ENCODE measurements at regions of chr13 and their contacts with region 1.

Region 1: DNA sequence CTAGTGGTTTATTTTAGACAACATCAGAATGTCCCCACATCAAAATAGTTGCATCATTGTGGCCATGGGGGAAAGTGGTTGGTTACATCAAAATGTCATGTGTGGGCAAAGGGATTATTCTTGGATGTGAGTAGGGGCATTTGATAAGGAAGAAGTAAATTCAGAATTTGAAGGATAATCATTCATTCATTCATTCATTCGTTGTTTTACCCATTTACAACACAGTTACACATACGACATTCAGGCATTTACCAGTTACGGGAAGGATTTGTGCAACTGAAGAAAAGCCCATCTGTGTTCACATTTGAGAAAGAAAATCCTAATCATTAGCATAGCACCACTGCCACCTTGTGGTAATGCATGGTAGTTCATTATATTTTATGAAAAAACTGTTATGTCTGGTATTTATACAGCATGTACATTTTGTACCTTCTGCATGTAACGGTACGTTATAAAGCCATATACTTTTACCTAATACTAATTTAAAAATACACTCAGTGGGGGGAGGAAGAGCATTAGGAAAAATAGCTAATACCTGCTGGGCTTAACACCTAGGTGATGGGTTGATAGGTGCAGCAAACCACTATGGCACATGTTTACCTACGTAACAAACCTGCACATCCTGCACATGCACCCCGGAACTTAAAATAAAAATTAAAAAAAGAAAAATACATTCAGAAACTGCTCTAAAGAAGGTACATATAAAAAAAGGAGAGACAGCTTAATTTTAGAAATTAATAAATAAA is 62.1 kb downstream of the DGKH start:
- DNase-seq: no peak
- ATAC-seq: peak; percentile 67
- H3K4me3 Mint-ChIP-seq: no peak overlapping the region
- H3K27ac Mint-ChIP-seq: no peak overlapping the region
- H3K4me1 Mint-ChIP-seq: no peaks in the 10 kb centered on the region
- H3K27me3 Mint-ChIP-seq: peaks cover 5% of the 10 kb centered on the region
- CTCF ChIP-seq: peak; percentile 21

Region 2: GRCh38 chr13:41075034-41075433 is 1035.5 kb before region 1 on chr13:
- CTCF ChIA-PET with region 1: no interaction called
- POLR2A ChIA-PET with region 1: no interaction called
- intact Hi-C with region 1: loop called (anchors 1 kb)
- DNase-seq: no peak
- ATAC-seq: peak; percentile 58
- H3K4me3 Mint-ChIP-seq: no peak overlapping the region
- H3K27ac Mint-ChIP-seq: no peak overlapping the region
- H3K4me1 Mint-ChIP-seq: no peaks in the 10 kb centered on the region
- H3K27me3 Mint-ChIP-seq: no peaks in the 10 kb centered on the region
- CTCF ChIP-seq: no peak

Region 3: DNA sequence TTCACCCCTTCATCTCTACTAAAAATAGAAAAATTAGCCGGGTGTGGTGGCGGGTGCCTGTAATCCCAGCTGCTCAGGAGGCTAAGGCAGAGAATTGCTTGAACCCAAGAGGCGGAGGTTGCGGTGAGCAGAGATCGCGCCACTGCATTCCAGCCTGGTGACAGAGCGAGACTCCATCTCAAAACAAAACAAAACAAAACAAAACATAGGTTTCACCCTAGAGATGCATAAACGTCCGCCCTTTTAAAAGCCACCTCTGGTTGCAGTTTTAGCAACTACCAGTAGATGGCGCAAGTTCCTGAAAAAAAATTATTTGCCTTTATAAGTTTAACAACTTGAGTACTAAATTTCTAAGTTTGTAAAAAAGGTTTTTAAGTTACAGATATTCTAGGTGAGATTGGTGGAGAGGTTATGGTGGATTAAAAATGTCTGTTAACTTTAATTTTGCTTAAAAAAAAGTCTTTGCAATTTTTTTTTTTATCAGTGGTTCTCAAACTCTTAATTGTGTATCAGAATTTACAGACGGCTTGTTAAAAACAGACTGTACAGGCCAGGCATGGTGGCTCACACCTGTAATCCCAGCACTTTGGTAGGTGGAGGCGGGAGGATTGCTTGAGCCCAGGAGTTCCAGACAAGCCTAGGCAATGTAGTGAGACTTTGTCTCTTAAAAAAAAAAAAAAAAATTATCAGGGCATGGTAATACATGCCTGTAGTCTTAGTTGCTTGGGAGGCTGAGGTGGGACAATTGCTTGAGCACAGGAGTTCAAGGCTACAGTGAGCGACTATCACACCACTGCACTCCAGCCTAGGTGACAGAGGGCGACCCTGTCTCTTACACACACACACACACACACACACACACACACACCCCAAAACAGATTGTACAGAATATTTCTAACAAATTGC is 757.4 kb before region 1 on chr13:
- CTCF ChIA-PET with region 1: interaction called, 3 read pairs
- POLR2A ChIA-PET with region 1: no interaction called
- intact Hi-C with region 1: loop called (anchors 1 kb)
- DNase-seq: no peak
- ATAC-seq: no peak
- H3K4me3 Mint-ChIP-seq: peak overlapping the region; percentile 15
- H3K27ac Mint-ChIP-seq: no peak overlapping the region
- H3K4me1 Mint-ChIP-seq: peaks cover 5% of the 10 kb centered on the region
- H3K27me3 Mint-ChIP-seq: no peaks in the 10 kb centered on the region
- CTCF ChIP-seq: no peak

Region 4: DNA sequence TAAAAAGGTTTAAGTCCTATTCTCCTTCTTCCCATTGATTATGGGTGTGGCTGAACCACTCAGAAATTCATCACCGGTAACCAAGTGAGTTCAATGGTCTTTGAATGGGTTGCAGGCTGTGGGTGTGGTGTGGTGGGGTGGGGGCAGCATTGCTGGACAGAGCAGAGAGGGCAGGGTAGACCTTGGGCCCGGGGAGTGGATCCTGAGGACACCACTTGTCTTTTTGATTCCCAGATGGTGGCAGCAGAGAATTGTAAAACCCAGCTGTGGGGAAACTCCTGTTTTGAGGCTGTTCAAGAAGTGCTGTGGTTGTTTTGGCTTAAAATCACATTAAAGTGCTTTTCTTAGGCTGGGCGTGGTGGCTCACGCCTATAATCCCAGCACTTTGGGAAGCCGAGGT is 699.1 kb before region 1 on chr13:
- CTCF ChIA-PET with region 1: no interaction called
- POLR2A ChIA-PET with region 1: no interaction called
- intact Hi-C with region 1: loop called (anchors 1 kb)
- DNase-seq: no peak
- ATAC-seq: no peak
- H3K4me3 Mint-ChIP-seq: no peak overlapping the region
- H3K27ac Mint-ChIP-seq: no peak overlapping the region
- H3K4me1 Mint-ChIP-seq: no peaks in the 10 kb centered on the region
- H3K27me3 Mint-ChIP-seq: peaks cover 6% of the 10 kb centered on the region
- CTCF ChIP-seq: no peak

Region 5: GRCh38 chr13:41668130-41668757 is 442.3 kb before region 1 on chr13:
- CTCF ChIA-PET with region 1: interaction called, 98 read pairs
- POLR2A ChIA-PET with region 1: no interaction called
- intact Hi-C with region 1: loop called (anchors 1 kb)
- DNase-seq: no peak
- ATAC-seq: peak; percentile 68
- H3K4me3 Mint-ChIP-seq: no peak overlapping the region
- H3K27ac Mint-ChIP-seq: no peak overlapping the region
- H3K4me1 Mint-ChIP-seq: no peaks in the 10 kb centered on the region
- H3K27me3 Mint-ChIP-seq: peaks cover 17% of the 10 kb centered on the region
- CTCF ChIP-seq: no peak

Region 6: GRCh38 chr13:41720839-41721561 is 389.6 kb before region 1 on chr13:
- CTCF ChIA-PET with region 1: no interaction called
- POLR2A ChIA-PET with region 1: no interaction called
- intact Hi-C with region 1: no loop called
- DNase-seq: no peak
- ATAC-seq: no peak
- H3K4me3 Mint-ChIP-seq: no peak overlapping the region
- H3K27ac Mint-ChIP-seq: no peak overlapping the region
- H3K4me1 Mint-ChIP-seq: no peaks in the 10 kb centered on the region
- H3K27me3 Mint-ChIP-seq: no peaks in the 10 kb centered on the region
- CTCF ChIP-seq: no peak

Region 7: DNA sequence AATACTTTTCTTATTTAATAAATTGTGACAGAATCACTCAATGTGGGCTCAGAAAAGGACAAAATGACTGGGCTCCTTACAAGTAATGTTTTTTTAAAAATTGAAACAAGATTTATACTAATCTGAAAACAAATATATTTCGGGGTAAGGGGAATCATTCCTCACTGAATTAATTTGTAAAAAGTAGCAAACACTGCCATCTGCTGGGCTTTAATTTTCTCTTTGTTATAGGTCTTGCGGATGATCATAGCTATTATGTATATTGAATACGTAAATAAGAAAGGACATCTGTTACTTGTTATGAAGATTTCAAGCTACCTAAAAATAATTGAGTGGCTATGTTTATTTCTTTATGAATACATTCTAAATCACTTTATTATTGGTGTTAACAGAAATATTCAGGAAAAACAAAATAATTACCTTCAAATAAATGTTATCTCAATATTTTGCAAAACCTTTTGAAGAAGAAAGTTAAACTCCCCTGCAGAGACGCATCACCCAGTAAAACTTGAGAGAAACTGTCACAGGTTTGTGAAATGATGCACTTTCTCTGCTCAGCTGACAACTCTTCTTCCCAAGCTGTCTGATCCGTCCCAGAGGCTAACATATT is 1694.0 kb after region 1 on chr13:
- CTCF ChIA-PET with region 1: no interaction called
- POLR2A ChIA-PET with region 1: no interaction called
- intact Hi-C with region 1: loop called (anchors 5 kb)
- DNase-seq: no peak
- ATAC-seq: no peak
- H3K4me3 Mint-ChIP-seq: no peak overlapping the region
- H3K27ac Mint-ChIP-seq: no peak overlapping the region
- H3K4me1 Mint-ChIP-seq: no peaks in the 10 kb centered on the region
- H3K27me3 Mint-ChIP-seq: peaks cover 7% of the 10 kb centered on the region
- CTCF ChIP-seq: no peak